Activated B cell treated with CpG ODN at 0.5 μM for 24 hours (primary cell): ENCODE measurements at regions of chr11 and their contacts with region 1.

Region 1: DNA sequence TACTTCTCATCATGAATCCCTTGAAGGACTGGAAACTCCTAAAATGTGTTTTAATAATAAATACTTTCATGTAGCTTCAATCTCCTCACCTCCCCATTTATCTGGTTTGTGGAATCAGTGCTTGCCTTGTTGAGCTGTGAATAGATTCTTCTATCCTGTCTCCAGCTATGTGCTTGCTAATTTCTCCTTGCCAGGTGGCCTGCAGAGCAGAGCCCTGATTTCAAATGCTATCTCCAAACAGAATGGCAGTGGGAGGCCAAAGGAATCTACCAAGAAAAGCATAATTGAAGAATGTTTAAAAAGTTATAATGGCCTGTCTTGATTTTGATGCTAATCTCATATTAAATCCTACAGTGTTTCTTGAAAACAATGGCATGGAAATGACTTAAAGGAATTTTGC is 309.3 kb upstream of the CHORDC1 start:
- DNase-seq: no peak
- ATAC-seq: no peak
- H3K4me3 Mint-ChIP-seq: no peak overlapping the region
- H3K27ac Mint-ChIP-seq: no peak overlapping the region
- H3K4me1 Mint-ChIP-seq: no peaks in the 10 kb centered on the region
- H3K27me3 Mint-ChIP-seq: no peaks in the 10 kb centered on the region
- CTCF ChIP-seq: no peak

Region 2: DNA sequence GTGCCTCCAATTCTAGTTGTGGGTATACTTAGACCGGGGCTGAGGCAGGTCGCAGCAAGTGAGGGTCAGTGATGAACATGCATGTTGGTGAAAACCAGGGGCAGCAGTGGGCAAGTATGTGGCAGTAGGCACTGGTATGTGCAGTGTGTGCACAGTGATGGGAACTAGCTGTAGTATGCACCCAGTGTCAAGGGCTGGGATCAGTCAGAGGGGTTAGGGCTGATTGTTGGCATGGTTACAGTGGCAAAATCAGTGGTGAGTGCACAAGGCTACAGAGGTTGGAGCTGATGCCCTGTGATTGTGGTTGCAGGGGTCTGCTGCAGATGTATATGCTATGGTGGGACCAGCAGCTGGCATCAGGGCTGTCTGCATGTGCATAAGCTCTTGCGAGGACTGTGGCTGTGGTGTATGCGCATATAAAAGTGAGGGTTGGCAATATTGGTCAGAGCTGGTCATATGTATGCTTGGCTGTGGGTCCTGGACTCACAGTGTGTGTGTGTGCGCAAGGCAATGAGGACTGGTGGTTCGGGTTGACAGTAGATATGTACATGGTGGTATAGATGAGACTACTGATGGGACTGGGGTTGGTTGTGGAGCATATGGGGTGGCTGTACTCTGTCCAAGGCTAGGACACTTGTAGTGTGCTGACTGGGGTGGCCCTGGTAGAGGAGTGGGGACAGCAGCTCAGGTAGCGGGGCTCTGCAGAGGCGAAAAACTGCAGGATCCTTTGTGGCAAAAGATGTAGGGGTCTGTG is 275.5 kb before region 1 on chr11:
- CTCF ChIA-PET with region 1: no interaction called
- POLR2A ChIA-PET with region 1: no interaction called
- intact Hi-C with region 1: no loop called
- DNase-seq: no peak
- ATAC-seq: no peak
- H3K4me3 Mint-ChIP-seq: no peak overlapping the region
- H3K27ac Mint-ChIP-seq: no peak overlapping the region
- H3K4me1 Mint-ChIP-seq: no peaks in the 10 kb centered on the region
- H3K27me3 Mint-ChIP-seq: peaks cover 12% of the 10 kb centered on the region
- CTCF ChIP-seq: no peak

Region 3: GRCh38 chr11:90423378-90423777 is 108.7 kb before region 1 on chr11:
- CTCF ChIA-PET with region 1: no interaction called
- POLR2A ChIA-PET with region 1: no interaction called
- intact Hi-C with region 1: no loop called
- DNase-seq: no peak
- ATAC-seq: no peak
- H3K4me3 Mint-ChIP-seq: no peak overlapping the region
- H3K27ac Mint-ChIP-seq: no peak overlapping the region
- H3K4me1 Mint-ChIP-seq: no peaks in the 10 kb centered on the region
- H3K27me3 Mint-ChIP-seq: no peaks in the 10 kb centered on the region
- CTCF ChIP-seq: no peak

Region 4: DNA sequence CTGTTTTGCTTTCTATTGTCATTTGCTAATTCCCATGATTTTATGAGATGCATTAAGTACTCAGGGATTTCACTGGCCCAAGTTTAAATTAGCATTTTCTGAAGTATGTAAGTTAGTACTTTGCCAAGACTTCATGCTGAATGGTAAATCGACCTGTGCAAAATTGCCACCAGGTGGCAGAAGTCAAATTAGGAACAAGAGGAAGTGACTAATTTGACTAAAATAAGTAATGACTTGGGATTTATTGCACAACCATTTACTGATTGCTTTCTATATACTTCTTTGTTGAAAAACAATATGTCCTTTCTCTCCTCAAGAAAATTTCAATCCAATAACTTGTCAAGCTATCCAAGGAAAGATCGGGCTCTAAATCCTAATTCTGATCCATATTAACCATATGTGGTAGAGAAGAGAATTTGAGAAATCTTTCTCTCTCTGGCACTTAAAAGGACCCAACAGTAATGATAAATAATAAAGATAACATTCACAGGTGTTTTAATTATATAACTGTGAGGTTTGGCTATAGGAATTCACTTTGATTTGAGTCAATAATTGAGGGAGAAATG is 55.6 kb before region 1 on chr11:
- CTCF ChIA-PET with region 1: no interaction called
- POLR2A ChIA-PET with region 1: no interaction called
- intact Hi-C with region 1: loop called (anchors 10 kb)
- DNase-seq: no peak
- ATAC-seq: no peak
- H3K4me3 Mint-ChIP-seq: no peak overlapping the region
- H3K27ac Mint-ChIP-seq: no peak overlapping the region
- H3K4me1 Mint-ChIP-seq: no peaks in the 10 kb centered on the region
- H3K27me3 Mint-ChIP-seq: no peaks in the 10 kb centered on the region
- CTCF ChIP-seq: no peak

Region 5: GRCh38 chr11:90496722-90497121 is 35.4 kb before region 1 on chr11:
- CTCF ChIA-PET with region 1: no interaction called
- POLR2A ChIA-PET with region 1: no interaction called
- intact Hi-C with region 1: no loop called
- DNase-seq: no peak
- ATAC-seq: no peak
- H3K4me3 Mint-ChIP-seq: no peak overlapping the region
- H3K27ac Mint-ChIP-seq: no peak overlapping the region
- H3K4me1 Mint-ChIP-seq: no peaks in the 10 kb centered on the region
- H3K27me3 Mint-ChIP-seq: no peaks in the 10 kb centered on the region
- CTCF ChIP-seq: no peak

Region 6: GRCh38 chr11:90594658-90595057 is 62.5 kb after region 1 on chr11:
- CTCF ChIA-PET with region 1: no interaction called
- POLR2A ChIA-PET with region 1: no interaction called
- intact Hi-C with region 1: no loop called
- DNase-seq: no peak
- ATAC-seq: no peak
- H3K4me3 Mint-ChIP-seq: no peak overlapping the region
- H3K27ac Mint-ChIP-seq: no peak overlapping the region
- H3K4me1 Mint-ChIP-seq: no peaks in the 10 kb centered on the region
- H3K27me3 Mint-ChIP-seq: no peaks in the 10 kb centered on the region
- CTCF ChIP-seq: no peak